HEK293 (cell line): ENCODE measurements at regions of chr7 and their contacts with region 1.

Region 1: GRCh38 chr7:157273208-157274093 is 63.4 kb upstream of the DNAJB6 start:
- H3K4me3 ChIP-seq: no peak overlapping the region
- H3K27ac ChIP-seq: no peak overlapping the region
- H3K4me1 ChIP-seq: no peaks in the 10 kb centered on the region
- CTCF ChIP-seq: peak; percentile 94

Region 2: GRCh38 chr7:157211690-157212089 is 61.8 kb before region 1 on chr7:
- CTCF ChIA-PET with region 1: no interaction called
- POLR2A ChIA-PET with region 1: no interaction called
- H3K4me3 ChIP-seq: no peak overlapping the region
- H3K27ac ChIP-seq: no peak overlapping the region
- H3K4me1 ChIP-seq: no peaks in the 10 kb centered on the region
- CTCF ChIP-seq: no peak

Region 3: DNA sequence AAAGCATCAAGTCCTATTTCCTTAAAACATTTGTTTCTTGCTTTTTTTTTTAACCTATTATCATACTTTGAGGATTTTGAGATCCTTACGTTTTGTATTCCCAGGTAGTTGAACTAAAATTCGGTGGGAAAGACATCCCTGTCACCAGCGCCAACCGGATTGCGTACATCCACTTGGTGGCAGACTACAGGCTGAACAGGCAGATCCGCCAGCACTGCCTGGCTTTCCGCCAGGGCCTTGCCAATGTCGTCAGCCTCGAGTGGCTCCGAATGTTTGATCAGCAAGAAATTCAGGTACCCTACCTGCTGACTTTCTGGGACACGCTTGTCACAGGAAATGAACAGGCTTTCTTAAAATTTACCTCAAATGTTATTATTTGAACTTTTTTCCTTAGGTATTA is 19.6 kb before region 1 on chr7:
- CTCF ChIA-PET with region 1: interaction called, 10 read pairs
- POLR2A ChIA-PET with region 1: no interaction called
- H3K4me3 ChIP-seq: no peak overlapping the region
- H3K27ac ChIP-seq: no peak overlapping the region
- H3K4me1 ChIP-seq: no peaks in the 10 kb centered on the region
- CTCF ChIP-seq: no peak

Region 4: GRCh38 chr7:157339777-157340677 is 66.6 kb after region 1 on chr7:
- CTCF ChIA-PET with region 1: interaction called, 18 read pairs
- POLR2A ChIA-PET with region 1: no interaction called
- H3K4me3 ChIP-seq: no peak overlapping the region
- H3K27ac ChIP-seq: no peak overlapping the region
- H3K4me1 ChIP-seq: no peaks in the 10 kb centered on the region
- CTCF ChIP-seq: peak; percentile 45; the same call in 1 of the 2 replicates

Region 5: DNA sequence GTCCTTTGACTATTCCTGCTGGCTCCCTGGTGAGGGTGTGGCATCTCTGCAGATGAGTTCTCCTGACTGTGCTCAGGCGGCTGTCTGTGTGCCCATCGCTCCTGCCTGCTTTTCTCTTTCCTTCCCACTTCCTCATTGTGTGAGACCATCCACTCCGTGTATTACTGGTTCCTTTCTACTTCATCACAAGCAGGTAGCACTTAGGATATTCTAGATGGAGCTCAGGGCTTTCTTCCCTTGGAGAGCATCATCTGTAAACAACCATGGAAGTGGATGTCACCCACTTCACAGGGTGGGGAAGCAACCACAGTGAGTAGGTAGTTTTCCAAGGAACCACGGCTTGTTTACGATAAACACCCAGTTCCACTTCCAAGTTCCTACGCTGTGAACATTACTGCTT is 79.1 kb after region 1 on chr7:
- CTCF ChIA-PET with region 1: no interaction called
- POLR2A ChIA-PET with region 1: no interaction called
- H3K4me3 ChIP-seq: no peak overlapping the region
- H3K27ac ChIP-seq: no peak overlapping the region
- H3K4me1 ChIP-seq: no peaks in the 10 kb centered on the region
- CTCF ChIP-seq: no peak